Cardiac septum (tissue), 1 donor: ENCODE measurements at regions of chr11 and their contacts with region 1.

Region 1: GRCh38 chr11:114762408-114762807 is 84.1 kb downstream of the NXPE2 start:
- DNase-seq: no peak

Region 2: DNA sequence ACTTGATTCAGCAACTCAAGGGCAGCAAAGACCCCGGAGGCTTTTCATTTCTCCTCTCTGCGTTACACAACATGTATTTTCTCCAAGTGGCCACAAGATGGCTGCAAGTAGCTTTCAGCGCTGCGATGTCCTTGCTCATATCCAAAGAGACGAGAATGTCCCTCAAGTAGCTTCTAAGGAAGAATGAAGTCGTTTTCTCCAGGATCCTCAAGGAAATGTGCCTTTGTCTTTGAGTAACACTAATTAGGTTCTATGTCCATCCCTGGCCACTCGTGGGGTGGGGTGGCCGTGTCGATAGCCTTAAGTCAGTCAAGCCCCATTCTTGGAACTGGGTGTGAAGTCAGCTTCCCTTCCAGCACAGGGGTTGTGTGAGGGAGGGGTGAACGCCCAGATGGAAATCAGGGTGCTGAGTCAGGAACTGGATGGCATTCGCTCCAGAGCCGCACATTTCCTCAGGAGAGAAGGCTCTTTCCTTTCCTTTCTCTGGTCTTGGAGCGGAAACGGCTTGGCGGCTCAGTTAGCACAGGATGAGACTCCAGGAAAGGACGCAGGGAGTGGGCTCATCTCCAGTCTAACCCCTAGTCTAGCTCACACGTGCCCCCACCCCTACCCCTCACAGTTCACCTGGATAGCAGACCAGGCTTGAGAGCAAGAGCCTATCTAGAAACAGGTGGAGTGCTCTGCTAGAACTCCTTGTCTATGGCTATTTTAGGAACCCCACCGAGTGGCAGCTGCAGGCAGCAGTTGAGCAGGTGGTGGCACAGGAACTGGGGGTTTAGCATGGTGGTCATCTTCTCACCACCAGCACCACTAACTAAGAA is 421.9 kb before region 1 on chr11:
- intact Hi-C with region 1: loop called (anchors 5 kb)
- DNase-seq: no peak

Region 3: DNA sequence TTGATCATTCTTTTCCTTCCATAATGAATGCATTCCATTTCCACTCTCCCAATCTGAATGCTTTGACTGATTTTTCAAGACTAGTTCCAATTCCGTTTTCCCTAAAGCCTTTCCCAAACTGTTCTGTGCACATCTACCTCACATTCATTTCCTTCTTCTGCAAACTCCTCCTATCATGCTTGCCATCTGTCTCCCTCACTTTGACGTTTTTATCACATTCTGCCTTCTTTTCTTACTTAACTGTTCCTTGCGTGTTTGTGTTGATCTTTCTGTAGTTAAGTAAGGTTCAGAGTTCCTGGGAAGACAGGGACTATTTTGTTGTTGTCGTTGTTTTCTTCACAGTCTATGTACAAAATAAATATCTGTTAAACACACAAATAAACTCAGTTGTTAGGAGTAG is 94.9 kb after region 1 on chr11:
- intact Hi-C with region 1: no loop called
- DNase-seq: no peak